Ascending aorta (tissue), 2 donors: ENCODE measurements at regions of chr7 and their contacts with region 1.

Region 1: DNA sequence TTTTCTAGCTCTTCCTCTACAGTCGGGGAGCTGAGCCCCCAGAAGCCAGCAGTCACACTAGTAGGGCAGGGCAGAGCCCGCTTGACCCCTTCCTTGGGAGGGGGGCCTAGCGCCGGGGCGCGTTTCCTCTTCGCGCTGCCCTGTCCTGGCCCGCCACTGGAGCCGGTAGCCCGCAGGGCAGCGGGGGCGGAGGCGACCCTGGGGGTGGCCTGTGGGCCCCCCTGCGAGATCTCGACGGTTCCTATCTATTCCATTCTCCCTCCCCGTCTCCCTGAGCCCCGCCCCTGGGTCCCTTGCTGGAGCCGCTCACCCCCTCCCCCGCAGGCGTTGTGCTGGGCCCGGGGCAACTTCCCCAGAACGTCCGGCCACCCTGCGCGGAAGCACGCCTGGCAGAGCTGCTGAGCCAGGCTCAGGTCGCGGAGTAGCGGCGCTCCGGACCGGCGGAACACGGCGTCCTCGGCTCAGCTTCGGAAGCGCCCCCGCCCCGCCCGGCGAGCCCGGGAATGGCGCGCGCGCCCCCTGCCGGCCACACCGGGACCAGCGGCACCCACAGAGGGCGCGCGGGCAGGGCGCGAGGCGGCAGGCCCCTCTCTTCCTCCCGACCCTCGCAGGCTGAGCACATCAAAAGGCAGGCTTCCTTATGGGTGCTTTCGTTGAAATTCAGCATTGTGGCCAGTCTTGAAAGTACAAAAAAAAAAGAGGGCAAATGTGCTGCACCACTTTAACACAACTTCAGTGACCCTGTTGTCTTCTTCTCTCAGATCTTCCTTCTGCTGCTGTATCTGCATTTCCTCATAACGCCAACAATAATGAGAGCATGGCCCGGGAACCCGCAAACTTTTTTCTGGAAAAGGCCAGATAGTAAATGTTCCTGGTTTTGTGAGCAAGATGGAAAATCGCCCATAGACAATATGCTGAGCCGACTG is 327.6 kb downstream of the TNS3 start:
- DNase-seq: peak; percentile 29 to 87
- H3K4me3 ChIP-seq: peak overlapping the region; percentile 51 to 77
- H3K27ac ChIP-seq: peak overlapping the region; percentile 74 to 89
- H3K4me1 ChIP-seq: peaks cover 5 to 11% of the 10 kb centered on the region in 2 donors
- H3K27me3 ChIP-seq: no peaks in the 10 kb centered on the region
- CTCF ChIP-seq: peak; percentile 55 to 96 (median 68)

Region 2: DNA sequence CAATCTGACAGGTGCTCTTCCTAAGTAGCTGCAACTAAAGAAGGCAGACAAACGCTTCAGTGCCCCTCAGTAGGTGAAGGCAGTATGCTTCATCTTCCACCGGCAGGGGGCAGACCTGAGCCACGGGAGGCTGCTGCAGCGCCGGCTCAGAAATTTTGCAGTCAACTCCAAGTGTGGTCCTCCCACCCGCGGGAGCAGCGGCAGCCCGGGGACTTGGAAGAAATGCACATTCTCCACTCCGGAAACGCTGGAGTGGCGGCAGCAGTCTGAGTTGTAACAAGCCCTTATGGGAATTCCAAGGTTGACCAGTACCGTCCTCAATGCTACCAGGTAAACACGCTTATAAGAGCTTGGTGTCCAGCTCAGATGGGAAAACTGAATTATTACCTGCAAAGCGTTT is 1336.7 kb before region 1 on chr7:
- intact Hi-C with region 1: loop called (anchors 2 kb)
- DNase-seq: peak in 1 of 2 donors; percentile 88
- H3K4me3 ChIP-seq: peak overlapping the region in 1 of 2 donors; percentile 85
- H3K27ac ChIP-seq: no peak overlapping the region
- H3K4me1 ChIP-seq: peaks cover 0 to 29% of the 10 kb centered on the region in 2 donors
- H3K27me3 ChIP-seq: no peaks in the 10 kb centered on the region
- CTCF ChIP-seq: peak; percentile 76 to 95 (median 95)

Region 3: DNA sequence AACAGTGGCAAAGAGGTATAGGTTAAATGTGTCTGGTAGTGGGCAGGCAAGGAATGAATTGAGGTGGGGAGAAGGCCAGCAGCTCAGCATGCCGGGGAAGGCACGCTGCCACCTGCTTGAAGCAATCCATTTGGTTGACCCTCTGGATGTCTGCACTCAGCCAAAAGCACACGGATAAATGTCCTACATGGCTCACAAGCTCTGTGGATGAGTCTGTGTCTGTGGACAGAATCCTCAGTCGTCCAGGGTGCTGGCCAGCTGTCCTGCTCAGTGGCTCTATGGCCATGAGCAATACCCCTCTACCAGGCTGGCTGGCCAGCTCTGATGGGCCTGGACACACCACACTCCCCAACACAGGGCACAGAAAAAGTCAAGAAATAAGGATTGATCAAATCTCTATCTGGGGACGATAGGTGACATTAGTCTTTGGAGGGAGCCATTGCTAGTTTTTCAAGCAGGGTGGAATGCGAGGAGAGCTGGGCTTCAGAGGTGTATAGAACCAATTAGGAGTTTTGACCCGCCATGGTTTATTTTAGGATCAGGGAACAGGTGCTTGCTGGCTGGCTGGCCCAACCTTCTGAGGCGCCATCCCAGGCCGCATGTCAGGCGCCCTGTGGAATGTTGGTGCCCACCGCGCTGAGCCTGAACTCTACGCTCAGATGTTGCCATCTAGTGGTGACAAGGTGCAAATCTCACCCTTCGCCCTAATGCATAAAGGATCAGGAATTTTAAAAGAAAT is 165.8 kb before region 1 on chr7:
- intact Hi-C with region 1: loop called (anchors 5 kb)
- DNase-seq: peak in 1 of 2 donors; percentile 74
- H3K4me3 ChIP-seq: no peak overlapping the region
- H3K27ac ChIP-seq: no peak overlapping the region
- H3K4me1 ChIP-seq: peaks cover 0 to 8% of the 10 kb centered on the region in 2 donors
- H3K27me3 ChIP-seq: no peaks in the 10 kb centered on the region
- CTCF ChIP-seq: peak; percentile 79 to 89 (median 82)

Region 4: DNA sequence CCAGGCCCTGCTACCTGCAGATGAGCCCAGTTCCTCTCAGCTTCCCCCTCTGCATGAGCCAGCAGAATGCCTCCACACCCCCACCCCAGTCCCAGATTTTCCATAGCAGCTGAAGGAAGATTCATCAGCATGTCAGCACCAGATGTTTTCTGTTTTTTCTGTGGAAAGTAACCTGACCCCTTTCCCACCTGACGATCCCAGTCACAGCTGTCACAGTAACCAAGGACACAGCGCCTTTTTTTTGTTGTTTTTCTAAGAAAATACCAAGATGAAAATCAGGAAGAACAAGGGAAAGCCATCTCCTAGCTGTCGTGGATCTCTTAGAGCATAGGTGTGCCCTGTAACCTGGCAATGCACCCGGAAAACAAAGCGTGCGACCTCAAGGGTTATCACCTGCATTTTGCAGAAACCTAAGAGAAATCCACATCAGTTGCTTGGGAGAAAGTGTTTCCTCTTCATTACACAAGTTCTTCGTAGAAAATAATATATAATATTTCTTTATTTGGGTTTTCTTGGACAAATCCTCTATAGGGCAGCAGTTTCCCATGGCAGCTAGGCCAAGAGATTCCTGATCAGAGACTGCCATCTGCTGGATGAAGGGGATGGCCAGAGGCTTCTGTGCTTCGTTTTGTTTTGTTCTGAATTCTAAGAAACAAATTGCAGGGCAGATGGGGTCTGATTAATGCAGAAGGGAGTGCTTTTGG is 74.4 kb before region 1 on chr7:
- intact Hi-C with region 1: loop called (anchors 2 kb)
- DNase-seq: no peak
- H3K4me3 ChIP-seq: no peak overlapping the region
- H3K27ac ChIP-seq: no peak overlapping the region
- H3K4me1 ChIP-seq: peaks cover 7 to 28% of the 10 kb centered on the region in 2 donors
- H3K27me3 ChIP-seq: no peaks in the 10 kb centered on the region
- CTCF ChIP-seq: peak; percentile 62 to 85 (median 81)

Region 5: GRCh38 chr7:47405921-47406792 is 151.8 kb after region 1 on chr7:
- intact Hi-C with region 1: no loop called
- DNase-seq: peak in 1 of 2 donors; percentile 88
- H3K4me3 ChIP-seq: peak overlapping the region in 1 of 2 donors; percentile 26
- H3K27ac ChIP-seq: peak overlapping the region; percentile 66 to 75
- H3K4me1 ChIP-seq: peaks cover 5 to 24% of the 10 kb centered on the region in 2 donors
- H3K27me3 ChIP-seq: no peaks in the 10 kb centered on the region
- CTCF ChIP-seq: no peak